Tibial artery (tissue), 4 donors: ENCODE measurements at regions of chr21 and their contacts with region 1.

Region 1: GRCh38 chr21:45287438-45288391 is at the start of gene POFUT2:
- DNase-seq: peak; percentile 95 to 98
- H3K4me3 ChIP-seq: peak within 1 kb of the TSS; percentile 79 to 81
- H3K27ac ChIP-seq: peak within 1 kb of the TSS; percentile 84 to 90
- H3K4me1 ChIP-seq: peaks cover 0 to 44% (median 36%) of the 10 kb centered on the region in 4 donors
- H3K27me3 ChIP-seq: no peaks in the 10 kb centered on the region
- CTCF ChIP-seq: peak in 1 of 2 experiments; percentile 20

Region 2: GRCh38 chr21:44939532-44940115 is 348.1 kb before region 1 on chr21 and contains the start of gene SLX9:
- intact Hi-C with region 1: loop called (anchors 10 kb)
- DNase-seq: peak; percentile 49 to 81
- H3K4me3 ChIP-seq: peak within 1 kb of the TSS; percentile 96 to 97
- H3K27ac ChIP-seq: peak within 1 kb of the TSS; percentile 64 to 66
- H3K4me1 ChIP-seq: peaks cover 0 to 32% (median 22%) of the 10 kb centered on the region in 4 donors
- H3K27me3 ChIP-seq: peaks cover 0 to 10% of the 10 kb centered on the region in 2 donors
- CTCF ChIP-seq: no peak

Region 3: GRCh38 chr21:45404730-45405270 is 117.1 kb after region 1 on chr21 and contains the start of gene COL18A1:
- intact Hi-C with region 1: loop called (anchors 10 kb)
- DNase-seq: peak in 1 of 2 donors; percentile 89
- H3K4me3 ChIP-seq: peak within 1 kb of the TSS; percentile 74 to 79
- H3K27ac ChIP-seq: peak within 1 kb of the TSS; percentile 91 to 98
- H3K4me1 ChIP-seq: peaks cover 0 to 52% (median 43%) of the 10 kb centered on the region in 4 donors
- H3K27me3 ChIP-seq: no peaks in the 10 kb centered on the region
- CTCF ChIP-seq: no peak

Region 4: DNA sequence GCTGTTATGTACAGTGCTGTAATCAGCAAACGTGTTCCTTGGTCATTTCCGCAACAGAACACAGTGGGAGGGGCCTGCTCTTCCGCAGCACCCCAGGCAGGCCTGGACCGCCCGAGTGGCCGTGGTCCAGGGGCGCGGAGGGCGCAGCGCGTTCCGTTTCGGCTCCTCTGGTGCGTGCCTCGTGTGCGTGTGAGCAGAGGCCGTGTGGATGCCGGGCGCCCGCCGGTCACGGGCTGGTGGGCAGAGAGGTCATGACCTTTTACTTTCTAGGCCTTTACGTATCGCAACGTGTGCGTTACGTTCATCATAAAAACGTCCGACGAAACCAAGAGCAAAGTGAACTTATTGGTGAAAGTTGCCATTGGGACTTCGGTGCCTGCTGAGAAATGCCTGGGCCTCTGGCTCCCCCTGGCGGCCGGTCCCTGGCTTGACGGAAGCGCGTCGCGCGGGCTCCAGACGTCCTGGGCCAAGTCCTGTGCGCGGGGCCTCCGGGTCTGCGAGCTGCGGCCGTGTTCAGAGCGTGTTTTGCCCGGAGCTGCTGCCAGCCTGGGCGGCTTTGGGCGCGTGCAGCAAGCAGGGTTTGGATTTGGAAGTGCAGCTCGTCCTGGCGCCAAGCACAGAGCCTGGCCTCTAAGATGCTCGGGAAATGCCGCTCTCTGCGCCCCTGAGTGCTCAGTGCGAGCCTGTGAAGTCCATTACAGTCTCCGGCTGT is 151.6 kb after region 1 on chr21:
- intact Hi-C with region 1: loop called (anchors 2 kb)
- DNase-seq: peak; percentile 82 to 91
- H3K4me3 ChIP-seq: peak overlapping the region; percentile 24 to 49
- H3K27ac ChIP-seq: peak overlapping the region; percentile 65 to 75
- H3K4me1 ChIP-seq: peaks cover 4 to 60% (median 48%) of the 10 kb centered on the region in 4 donors
- H3K27me3 ChIP-seq: no peaks in the 10 kb centered on the region
- CTCF ChIP-seq: peak; percentile 95 to 99

Region 5: GRCh38 chr21:45709173-45709572 is 421.5 kb after region 1 on chr21:
- intact Hi-C with region 1: no loop called
- DNase-seq: no peak
- H3K4me3 ChIP-seq: no peak overlapping the region
- H3K27ac ChIP-seq: no peak overlapping the region
- H3K4me1 ChIP-seq: no peaks in the 10 kb centered on the region
- H3K27me3 ChIP-seq: peaks cover 0 to 12% of the 10 kb centered on the region in 2 donors
- CTCF ChIP-seq: no peak